Motor neuron (in vitro differentiated cells): ENCODE measurements at regions of chr12 and their contacts with region 1.

Region 1: DNA sequence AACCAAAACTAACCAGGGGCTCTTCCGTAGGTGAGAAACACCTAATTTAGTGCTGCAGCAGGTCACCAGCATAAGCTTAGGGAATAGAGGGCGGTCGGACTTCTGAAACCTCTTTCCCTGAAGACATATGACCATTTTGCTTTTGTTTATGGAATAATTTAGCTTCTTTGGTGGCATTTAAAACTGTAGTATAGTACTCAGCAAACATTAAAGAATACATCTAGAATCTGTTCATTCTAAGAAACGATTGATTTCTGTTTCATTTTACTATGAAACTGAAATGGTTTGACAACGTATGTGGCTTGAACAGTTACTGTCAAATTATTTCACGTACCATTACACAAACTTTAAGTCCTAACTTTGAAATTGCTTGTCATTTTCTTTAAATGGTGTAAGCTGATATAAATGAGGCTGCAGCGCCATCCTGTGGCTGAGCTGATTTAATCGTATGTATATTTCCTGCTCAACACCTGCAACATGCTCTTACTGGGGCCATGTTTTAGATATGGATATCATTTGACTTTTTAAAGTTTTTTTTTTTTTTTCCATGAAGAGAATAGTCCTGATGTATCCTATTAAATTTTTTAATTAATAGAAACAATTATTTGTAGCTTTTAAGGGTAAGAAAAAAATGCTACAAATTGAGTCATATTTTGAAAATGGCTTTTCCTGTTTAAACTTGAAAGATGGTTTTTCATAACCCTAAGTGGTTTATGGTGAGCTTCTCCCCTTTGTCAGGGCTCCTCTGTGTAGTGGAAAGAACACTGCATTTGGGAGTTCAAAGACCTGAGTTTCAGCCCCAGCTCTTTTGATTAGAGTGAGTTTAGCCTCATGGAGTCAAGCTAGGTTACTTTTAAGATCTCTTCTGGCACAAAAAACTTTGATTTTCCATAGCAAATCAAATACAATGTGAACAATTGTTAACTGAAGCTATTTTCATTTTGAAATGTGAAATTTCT is 27.4 kb downstream of the CFAP54 start:
- ATAC-seq: peak in 5 of 8 experiments; percentile 32 to 78 (median 71)
- H3K4me3 ChIP-seq: no peak overlapping the region
- H3K27ac ChIP-seq: no peak overlapping the region
- H3K4me1 ChIP-seq: peaks cover under 1 to 6% of the 10 kb centered on the region in 2 donors

Region 2: DNA sequence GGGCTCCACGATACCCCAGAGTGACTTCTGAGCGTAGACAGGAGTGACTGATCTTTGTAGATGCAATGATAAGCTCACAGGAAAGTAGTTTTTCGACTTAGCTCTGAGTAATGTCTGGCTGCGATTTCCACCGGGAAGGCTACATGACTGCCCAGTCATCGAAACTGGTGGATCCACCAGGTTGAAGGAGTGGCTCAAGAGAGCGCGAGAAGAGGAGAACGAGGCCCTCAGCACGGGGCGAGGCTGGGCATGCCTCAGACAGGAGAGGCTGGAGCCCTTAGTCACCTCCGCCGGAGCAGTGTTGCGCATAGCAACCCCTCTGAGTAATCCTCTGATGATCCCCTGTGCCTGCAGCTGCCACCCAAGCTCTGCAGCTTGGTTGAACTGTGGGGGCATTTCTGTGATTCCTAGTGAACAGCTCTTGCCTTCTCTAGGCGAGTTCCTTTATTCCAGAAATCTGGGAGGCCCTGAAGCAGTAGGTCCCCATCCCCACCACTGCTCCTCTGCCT is 297.0 kb before region 1 on chr12:
- in situ Hi-C with region 1: loop called in 1 of 9 experiments (anchors 25 kb)
- ATAC-seq: peak in 4 of 8 experiments; percentile 50 to 99 (median 90)
- H3K4me3 ChIP-seq: no peak overlapping the region
- H3K27ac ChIP-seq: no peak overlapping the region
- H3K4me1 ChIP-seq: peaks cover 12 to 21% of the 10 kb centered on the region in 2 donors

Region 3: GRCh38 chr12:96258104-96258961 is 258.4 kb before region 1 on chr12:
- in situ Hi-C with region 1: loop called in 1 of 9 experiments (anchors 25 kb)
- ATAC-seq: peak; percentile 32 to 86 (median 48)
- H3K4me3 ChIP-seq: no peak overlapping the region
- H3K27ac ChIP-seq: no peak overlapping the region
- H3K4me1 ChIP-seq: peaks cover 9 to 10% of the 10 kb centered on the region in 2 donors

Region 4: DNA sequence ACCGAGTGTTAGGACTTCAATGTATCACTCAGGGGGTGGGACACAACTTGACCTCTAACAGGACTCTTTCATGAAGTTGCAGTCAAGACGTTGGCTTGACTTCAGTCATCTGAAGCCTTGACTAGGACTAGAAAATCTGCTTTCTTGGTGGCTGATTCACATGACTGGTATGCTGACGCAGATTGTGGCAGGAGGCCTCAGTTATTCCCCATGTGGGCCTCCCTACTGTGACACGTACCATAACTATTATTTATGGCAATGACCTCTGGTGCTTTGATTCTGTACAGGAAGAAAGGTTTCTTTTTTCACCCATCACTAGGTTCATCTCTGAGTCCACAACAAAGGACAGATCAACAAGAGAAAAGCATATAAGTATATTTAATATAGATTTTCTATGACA is 660.7 kb after region 1 on chr12:
- in situ Hi-C with region 1: no loop called
- ATAC-seq: peak in 2 of 8 experiments; percentile 42 to 50
- H3K4me3 ChIP-seq: no peak overlapping the region
- H3K27ac ChIP-seq: no peak overlapping the region
- H3K4me1 ChIP-seq: peaks cover 13 to 25% of the 10 kb centered on the region in 2 donors